ENCODE measurements at regions of chr4 and their contacts with region 1.

Region 1: GRCh38 chr4:38759113-38759789 is 23.5 kb downstream of the TLR10 start:
- DNase-seq: peak in 4 of 6 donors; percentile 19 to 57 (median 32)
- ATAC-seq: peak; percentile 68 to 83 (median 82)
- H3K4me3 ChIP-seq: no peak overlapping the region
- H3K27ac ChIP-seq: no peak overlapping the region
- H3K4me1 ChIP-seq: no peaks in the 10 kb centered on the region
- H3K27me3 ChIP-seq: no peaks in the 10 kb centered on the region
- CTCF ChIP-seq: peak; percentile 15 to 62 (median 56)

Region 2: GRCh38 chr4:38804654-38805295 is 45.5 kb after region 1 on chr4 and contains the start of gene TLR1:
- intact Hi-C with region 1: loop called in 1 of 3 experiments (anchors 10 kb)
- DNase-seq: no peak
- ATAC-seq: peak; percentile 83 to 90 (median 89)
- H3K4me3 ChIP-seq: peak within 1 kb of the TSS; percentile 5 to 43 (median 30)
- H3K27ac ChIP-seq: peak within 1 kb of the TSS; percentile 29 to 82 (median 64)
- H3K4me1 ChIP-seq: peaks cover 0 to 8% (median 0%) of the 10 kb centered on the region in 3 donors
- H3K27me3 ChIP-seq: no peaks in the 10 kb centered on the region
- CTCF ChIP-seq: peak in 3 of 4 donors; percentile 30 to 51 (median 49)
- total RNA-seq, gene TLR1: 3.7 to 25.3 (median 7.4) TPM

Region 3: GRCh38 chr4:39134683-39135319 is 375.6 kb after region 1 on chr4:
- intact Hi-C with region 1: loop called in 1 of 3 experiments (anchors 10 kb)
- DNase-seq: no peak
- ATAC-seq: peak in 3 of 4 donors; percentile 8 to 28 (median 26)
- H3K4me3 ChIP-seq: no peak overlapping the region
- H3K27ac ChIP-seq: no peak overlapping the region
- H3K4me1 ChIP-seq: no peaks in the 10 kb centered on the region
- H3K27me3 ChIP-seq: no peaks in the 10 kb centered on the region
- CTCF ChIP-seq: no peak

Measured in pancreas (tissue), 10 donors.